Tibial artery (tissue), 4 donors: ENCODE measurements at regions of chr7 and their contacts with region 1.

Region 1: DNA sequence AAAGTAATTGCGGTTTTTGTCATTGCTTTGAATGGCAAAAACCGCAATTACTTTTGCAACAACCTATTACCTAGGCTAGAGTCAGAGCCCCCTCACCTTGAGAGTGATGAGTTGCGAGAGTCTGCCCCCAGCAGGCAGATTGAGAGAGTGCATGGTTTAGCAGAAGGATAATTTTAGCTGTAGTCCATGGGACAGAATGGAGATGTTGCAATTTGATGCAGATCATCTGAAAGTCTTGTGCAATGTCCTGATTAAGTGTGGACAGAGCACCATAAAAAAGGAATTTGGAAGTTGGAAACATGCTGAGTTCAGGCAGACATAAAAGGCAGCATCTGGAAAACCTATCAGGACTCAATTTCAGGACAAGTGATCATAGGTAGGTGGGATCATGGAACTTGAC is 48.7 kb downstream of the GPR141 start:
- DNase-seq: peak; percentile 61 to 81
- H3K4me3 ChIP-seq: no peak overlapping the region
- H3K27ac ChIP-seq: peak overlapping the region; percentile 3 to 41
- H3K4me1 ChIP-seq: peaks cover 0 to 48% (median 33%) of the 10 kb centered on the region in 4 donors
- H3K27me3 ChIP-seq: no peaks in the 10 kb centered on the region
- CTCF ChIP-seq: peak; percentile 73 to 74

Region 2: GRCh38 chr7:37208528-37208927 is 523.7 kb before region 1 on chr7:
- intact Hi-C with region 1: loop called (anchors 5 kb)
- DNase-seq: peak; percentile 88 to 90
- H3K4me3 ChIP-seq: no peak overlapping the region
- H3K27ac ChIP-seq: peak overlapping the region; percentile 74 to 79
- H3K4me1 ChIP-seq: peaks cover 0 to 38% (median 23%) of the 10 kb centered on the region in 4 donors
- H3K27me3 ChIP-seq: no peaks in the 10 kb centered on the region
- CTCF ChIP-seq: peak; percentile 40 to 50